ENCODE measurements at regions of chr5 and their contacts with region 1.

Region 1: DNA sequence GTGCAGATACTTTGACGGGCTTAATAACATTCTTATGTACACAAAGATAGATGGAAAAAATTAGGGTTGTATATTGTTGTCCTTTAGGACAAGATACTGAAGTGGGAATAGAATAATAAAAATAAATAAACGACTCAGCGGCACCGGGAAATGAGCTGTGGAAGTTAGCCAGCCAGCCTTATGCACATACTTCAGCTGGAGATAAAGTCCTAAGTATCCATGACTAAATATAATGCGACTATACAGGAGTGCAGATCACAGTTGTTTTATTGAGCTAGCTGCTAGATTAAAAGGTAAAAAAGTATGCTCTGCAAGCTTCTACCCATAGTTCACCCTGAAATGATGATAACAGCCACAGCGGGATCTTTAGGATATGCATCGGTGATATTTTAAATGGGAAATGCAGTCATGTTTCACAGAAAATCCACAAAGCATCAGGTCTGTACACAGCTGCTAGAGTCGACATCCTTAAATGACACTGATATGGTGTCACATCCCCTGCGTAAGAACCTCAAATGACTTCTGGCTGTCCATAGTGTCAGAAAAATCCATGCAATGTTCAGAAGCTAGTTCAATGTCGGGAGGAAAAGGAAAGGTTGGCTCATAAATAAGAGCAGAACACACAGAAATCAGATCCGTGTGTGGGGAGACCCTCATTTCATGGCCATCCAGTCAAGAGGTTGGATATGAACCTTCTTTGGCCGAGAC is 392.8 kb upstream of the DAP start:
- DNase-seq: no peak
- ATAC-seq: peak in 1 of 2 donors; percentile 68

Region 2: GRCh38 chr5:10987930-10988504 is 165.8 kb before region 1 on chr5:
- intact Hi-C with region 1: loop called in 1 of 2 experiments (anchors 10 kb)
- DNase-seq: peak; percentile 66
- ATAC-seq: peak; percentile 86 to 88